ENCODE measurements at regions of chr19 and their contacts with region 1.

Region 1: DNA sequence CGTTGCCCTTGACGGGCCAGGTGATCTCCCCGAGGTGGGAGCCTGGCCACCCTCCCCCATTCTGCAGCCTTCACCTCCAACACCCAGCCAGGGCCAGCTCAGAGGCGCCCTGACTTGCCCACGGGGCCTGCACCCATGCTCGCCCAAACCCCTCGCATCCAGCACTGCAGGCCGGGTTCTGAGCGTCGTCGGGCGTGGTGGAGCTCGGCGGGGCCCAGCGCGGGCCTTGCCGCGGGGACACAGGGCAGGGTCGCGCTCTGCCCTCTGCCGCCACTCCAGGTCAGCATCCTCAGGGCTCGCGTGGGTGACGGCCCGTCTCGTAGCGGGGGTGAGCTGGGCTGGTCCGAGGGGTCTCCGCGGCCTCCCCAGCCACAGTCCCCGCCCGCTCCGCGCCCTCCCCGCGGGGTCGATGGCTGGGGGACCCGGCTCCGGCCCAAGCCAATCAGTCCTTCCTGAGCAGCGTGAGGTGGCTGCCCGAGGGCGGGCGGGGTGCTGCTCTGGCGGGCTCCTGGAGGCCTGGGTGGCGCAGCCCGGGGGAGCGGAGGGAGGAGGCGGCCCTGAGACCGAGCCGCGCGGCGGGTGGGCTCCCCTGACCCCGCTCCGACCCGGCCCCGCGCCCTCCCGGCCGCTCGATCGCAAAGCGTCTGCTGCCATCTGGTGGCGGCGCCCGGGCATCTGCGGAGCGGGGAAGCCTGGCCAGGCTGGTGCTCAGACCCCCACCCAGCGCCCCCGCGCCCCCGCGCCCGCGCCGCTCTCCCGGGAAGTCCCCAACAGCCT is 61.4 kb downstream of the CCNE1 start:
- DNase-seq: peak in 1 of 2 donors; percentile 32
- ATAC-seq: peak; percentile 53 to 54
- H3K4me3 ChIP-seq: peak overlapping the region; percentile 61 to 73 (median 64)
- H3K27ac ChIP-seq: peak overlapping the region; percentile 85 to 92 (median 88)
- H3K4me1 ChIP-seq: peaks cover 15 to 37% of the 10 kb centered on the region in 2 donors
- H3K27me3 ChIP-seq: no peaks in the 10 kb centered on the region
- CTCF ChIP-seq: peak; percentile 75 to 96 (median 91)
- POLR2A ChIP-seq: no peak

Region 2: GRCh38 chr19:29761575-29762232 is 111.5 kb before region 1 on chr19:
- in situ Hi-C with region 1: loop called in 2 of 4 experiments (anchors 10 to 25 kb)
- intact Hi-C with region 1: loop called (anchors 1 kb)
- DNase-seq: no peak
- ATAC-seq: no peak
- H3K4me3 ChIP-seq: no peak overlapping the region
- H3K27ac ChIP-seq: no peak overlapping the region
- H3K4me1 ChIP-seq: peaks cover 0 to 3% of the 10 kb centered on the region in 2 donors
- H3K27me3 ChIP-seq: no peaks in the 10 kb centered on the region
- CTCF ChIP-seq: no peak
- POLR2A ChIP-seq: no peak

Region 3: DNA sequence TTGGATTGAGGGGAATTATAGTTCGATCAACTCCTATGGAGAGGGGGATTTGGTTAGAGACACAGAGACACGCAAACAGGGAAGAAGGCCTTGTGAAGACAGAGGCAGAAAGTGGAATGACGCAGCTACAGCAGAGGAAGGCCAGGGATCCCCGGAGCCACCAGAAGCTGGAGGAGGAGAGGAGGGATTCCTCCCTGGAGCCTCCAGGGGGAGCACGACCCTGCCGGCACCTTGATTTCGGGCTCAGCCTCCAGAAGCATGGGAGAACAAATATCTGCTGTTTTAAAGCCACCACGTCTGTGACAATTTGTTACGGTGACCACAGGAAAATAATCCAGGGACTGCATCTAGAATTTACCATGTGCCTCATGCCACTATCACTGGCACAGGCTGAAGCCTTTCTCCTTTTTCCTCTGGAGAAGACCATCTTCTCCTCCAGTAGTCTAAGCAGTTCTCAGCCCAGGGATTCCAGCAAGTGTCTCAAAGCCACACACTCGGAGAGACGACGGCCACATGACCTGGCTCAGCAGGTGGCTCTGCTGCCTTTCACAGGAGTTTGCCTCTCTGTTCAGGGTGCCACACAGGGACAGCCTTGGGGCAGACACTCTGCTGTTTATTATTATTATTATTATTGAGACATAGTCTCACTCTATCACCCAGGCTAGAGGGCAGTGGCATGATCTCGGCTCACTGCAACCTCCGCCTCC is 101.4 kb before region 1 on chr19:
- in situ Hi-C with region 1: loop called (anchors 5 to 25 kb)
- intact Hi-C with region 1: loop called (anchors 1 kb)
- DNase-seq: no peak
- ATAC-seq: peak in 1 of 2 donors; percentile 36
- H3K4me3 ChIP-seq: no peak overlapping the region
- H3K27ac ChIP-seq: no peak overlapping the region
- H3K4me1 ChIP-seq: no peaks in the 10 kb centered on the region
- H3K27me3 ChIP-seq: no peaks in the 10 kb centered on the region
- CTCF ChIP-seq: peak; percentile 23 to 67 (median 44)
- POLR2A ChIP-seq: no peak

Region 4: DNA sequence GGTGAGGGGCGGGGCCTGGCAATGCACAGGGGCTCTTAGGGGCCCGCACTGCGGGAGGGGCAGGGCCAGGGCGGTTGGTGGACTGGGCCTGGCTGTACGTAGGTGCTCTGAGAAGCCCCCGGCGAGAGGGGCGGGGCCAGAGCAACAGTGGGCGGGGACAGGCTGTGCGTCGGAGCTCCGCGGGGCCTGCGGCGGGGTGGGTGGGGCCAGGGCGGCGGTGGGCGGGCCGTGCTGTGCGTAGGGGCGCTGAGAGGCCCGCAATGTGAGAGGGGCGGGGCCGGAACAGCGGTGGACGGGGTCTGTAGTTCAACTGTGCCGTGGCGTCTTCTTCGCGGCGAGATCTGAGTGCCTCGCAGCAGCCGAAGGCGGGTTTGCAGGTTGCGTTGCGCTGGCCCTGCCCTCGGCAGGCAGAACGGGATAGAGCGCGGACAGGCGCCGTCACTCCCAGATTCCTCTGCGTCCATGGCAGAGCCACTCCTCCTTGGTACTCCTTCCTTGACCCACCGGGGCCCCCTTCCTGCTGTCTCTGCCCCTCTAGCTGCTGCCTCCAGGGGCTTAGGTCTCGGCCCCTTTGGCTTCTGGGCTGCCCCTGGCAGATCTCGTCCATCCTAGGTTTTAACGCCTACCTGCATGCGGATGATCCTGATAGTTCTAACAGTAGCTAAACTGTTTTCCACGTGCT is 28.2 kb before region 1 on chr19:
- in situ Hi-C with region 1: no loop called
- intact Hi-C with region 1: loop called (anchors 1 kb)
- DNase-seq: peak; percentile 86 to 90
- ATAC-seq: peak; percentile 86 to 89
- H3K4me3 ChIP-seq: peak overlapping the region; percentile 67 to 88 (median 74)
- H3K27ac ChIP-seq: peak overlapping the region; percentile 76 to 92 (median 90)
- H3K4me1 ChIP-seq: peaks cover 12 to 15% of the 10 kb centered on the region in 2 donors
- H3K27me3 ChIP-seq: peaks cover 0 to 8% (median 7%) of the 10 kb centered on the region in 3 donors
- CTCF ChIP-seq: peak in 1 of 5 experiments; percentile 9
- POLR2A ChIP-seq: peak; percentile 9 to 50

Region 5: DNA sequence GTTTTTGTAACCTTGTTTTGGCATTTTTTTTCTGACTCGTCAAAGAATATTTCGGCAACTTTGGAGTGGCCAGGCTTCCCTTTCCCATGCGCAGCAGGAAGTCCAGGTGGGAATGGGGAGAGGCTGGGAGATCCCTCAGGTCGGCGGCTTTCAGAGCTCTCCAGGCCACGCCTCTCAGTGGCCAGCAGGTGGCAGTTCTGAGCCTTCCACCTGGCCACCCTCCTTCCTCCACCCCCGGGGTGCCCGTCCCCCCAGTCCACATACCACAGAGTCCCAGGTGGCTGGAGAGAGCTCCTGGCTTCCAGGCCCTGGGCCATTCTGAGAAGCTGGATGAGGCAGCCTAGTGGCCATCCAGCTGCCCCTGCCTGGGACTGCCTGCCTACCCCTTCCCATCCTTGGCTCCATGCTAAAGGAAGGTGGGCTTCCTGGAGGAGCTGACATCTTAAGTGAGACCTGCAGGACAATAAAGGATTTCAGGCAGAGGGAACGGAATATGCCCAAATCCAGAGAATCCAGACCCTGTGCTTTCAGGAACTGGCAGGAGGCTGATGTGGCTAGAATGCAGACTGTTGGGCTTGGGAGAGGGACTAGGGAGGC is 15.1 kb before region 1 on chr19:
- in situ Hi-C with region 1: no loop called
- intact Hi-C with region 1: loop called (anchors 1 kb)
- DNase-seq: no peak
- ATAC-seq: no peak
- H3K4me3 ChIP-seq: no peak overlapping the region
- H3K27ac ChIP-seq: no peak overlapping the region
- H3K4me1 ChIP-seq: no peaks in the 10 kb centered on the region
- H3K27me3 ChIP-seq: no peaks in the 10 kb centered on the region
- CTCF ChIP-seq: peak; percentile 21 to 77 (median 59)
- POLR2A ChIP-seq: no peak

Region 6: GRCh38 chr19:29941828-29942403 is 68.7 kb after region 1 on chr19 and contains the start of gene URI1:
- in situ Hi-C with region 1: no loop called
- intact Hi-C with region 1: loop called (anchors 2 kb)
- DNase-seq: peak; percentile 80 to 87
- ATAC-seq: peak; percentile 93 to 94
- H3K4me3 ChIP-seq: peak within 1 kb of the TSS; percentile 65 to 88 (median 78)
- H3K27ac ChIP-seq: peak within 1 kb of the TSS; percentile 70 to 87 (median 80)
- H3K4me1 ChIP-seq: peaks cover 24 to 25% of the 10 kb centered on the region in 2 donors
- H3K27me3 ChIP-seq: no peaks in the 10 kb centered on the region
- CTCF ChIP-seq: no peak
- POLR2A ChIP-seq: peak; percentile 74 to 84
- total RNA-seq, gene URI1: 37.4 to 84.1 (median 59.2) TPM

Region 7: GRCh38 chr19:30001791-30002190 is 128.6 kb after region 1 on chr19:
- in situ Hi-C with region 1: no loop called
- intact Hi-C with region 1: no loop called
- DNase-seq: no peak
- ATAC-seq: no peak
- H3K4me3 ChIP-seq: no peak overlapping the region
- H3K27ac ChIP-seq: no peak overlapping the region
- H3K4me1 ChIP-seq: peaks cover 0 to 5% of the 10 kb centered on the region in 2 donors
- H3K27me3 ChIP-seq: no peaks in the 10 kb centered on the region
- CTCF ChIP-seq: no peak
- POLR2A ChIP-seq: no peak

Measured in gastrocnemius medialis (tissue), 4 donors.